Endothelial cell of umbilical vein (primary cell): ENCODE measurements at regions of chr5 and their contacts with region 1.

Region 1: GRCh38 chr5:163347671-163348070 is 89.7 kb upstream of the CCNG1 start:
- DNase-seq: peak; percentile 57
- H3K4me3 ChIP-seq: no peak overlapping the region
- H3K27ac ChIP-seq: no peak overlapping the region
- H3K4me1 ChIP-seq: no peaks in the 10 kb centered on the region
- H3K27me3 ChIP-seq: no peaks in the 10 kb centered on the region
- CTCF ChIP-seq: peak; percentile 60 to 66
- POLR2A ChIP-seq: no peak

Region 2: DNA sequence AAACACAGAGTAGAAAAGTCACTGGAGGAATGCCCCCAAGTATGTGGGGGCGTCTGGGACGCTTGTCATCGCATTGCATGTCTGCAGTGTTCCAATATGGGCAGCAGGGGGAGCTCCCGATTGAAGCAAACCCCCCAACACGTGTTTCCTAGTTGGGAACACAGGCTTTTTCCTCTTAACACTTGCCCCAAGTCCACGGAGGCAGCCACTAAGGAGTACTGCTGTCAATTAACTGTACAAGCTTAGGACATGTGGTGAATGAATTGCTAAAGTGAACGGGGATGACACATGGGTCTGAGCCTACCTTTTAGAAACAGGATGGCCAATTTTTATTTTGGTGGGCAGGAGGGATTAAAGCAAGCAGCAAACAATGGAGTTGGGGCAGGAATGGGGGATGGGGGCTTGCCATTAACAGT is 1803.3 kb before region 1 on chr5:
- CTCF ChIA-PET with region 1: interaction called, 17 read pairs
- POLR2A ChIA-PET with region 1: no interaction called
- dilution Hi-C with region 1: no loop called
- intact Hi-C with region 1: no loop called
- DNase-seq: peak; percentile 12
- H3K4me3 ChIP-seq: no peak overlapping the region
- H3K27ac ChIP-seq: no peak overlapping the region
- H3K4me1 ChIP-seq: no peaks in the 10 kb centered on the region
- H3K27me3 ChIP-seq: peaks cover 9 to 28% of the 10 kb centered on the region in 2 experiments
- CTCF ChIP-seq: peak; percentile 66 to 72
- POLR2A ChIP-seq: no peak

Region 3: DNA sequence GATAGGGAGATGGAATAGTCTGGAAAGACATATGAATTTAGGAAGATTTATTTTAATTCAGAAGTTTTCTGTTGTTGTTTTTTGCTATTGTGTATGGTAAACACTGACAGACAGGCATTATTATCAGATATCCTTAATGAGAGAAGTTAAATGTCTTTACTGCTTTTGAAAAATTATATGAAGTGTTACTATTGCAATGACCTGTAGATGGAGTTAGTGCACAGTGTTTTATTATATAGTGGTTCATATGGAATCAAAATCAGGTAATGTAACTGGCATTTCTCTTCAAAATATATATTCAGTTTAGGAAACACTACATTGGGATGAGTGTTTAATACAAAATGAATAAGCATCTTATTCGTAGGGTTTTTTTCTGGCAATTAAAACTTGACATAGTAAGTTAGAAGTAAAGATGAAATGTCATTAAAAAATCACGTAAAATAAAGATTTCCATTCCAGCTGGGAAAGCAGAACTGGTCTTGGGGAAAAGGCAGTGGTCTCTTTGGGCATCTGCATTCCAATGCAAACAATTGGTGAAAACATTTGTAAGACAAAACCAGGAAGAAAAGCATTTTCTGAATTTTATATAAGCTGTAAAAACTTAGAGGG is 1495.9 kb before region 1 on chr5:
- CTCF ChIA-PET with region 1: no interaction called
- POLR2A ChIA-PET with region 1: no interaction called
- dilution Hi-C with region 1: no loop called
- intact Hi-C with region 1: loop called (anchors 2 kb)
- DNase-seq: no peak
- H3K4me3 ChIP-seq: no peak overlapping the region
- H3K27ac ChIP-seq: no peak overlapping the region
- H3K4me1 ChIP-seq: no peaks in the 10 kb centered on the region
- H3K27me3 ChIP-seq: no peaks in the 10 kb centered on the region
- CTCF ChIP-seq: no peak
- POLR2A ChIP-seq: no peak

Region 4: DNA sequence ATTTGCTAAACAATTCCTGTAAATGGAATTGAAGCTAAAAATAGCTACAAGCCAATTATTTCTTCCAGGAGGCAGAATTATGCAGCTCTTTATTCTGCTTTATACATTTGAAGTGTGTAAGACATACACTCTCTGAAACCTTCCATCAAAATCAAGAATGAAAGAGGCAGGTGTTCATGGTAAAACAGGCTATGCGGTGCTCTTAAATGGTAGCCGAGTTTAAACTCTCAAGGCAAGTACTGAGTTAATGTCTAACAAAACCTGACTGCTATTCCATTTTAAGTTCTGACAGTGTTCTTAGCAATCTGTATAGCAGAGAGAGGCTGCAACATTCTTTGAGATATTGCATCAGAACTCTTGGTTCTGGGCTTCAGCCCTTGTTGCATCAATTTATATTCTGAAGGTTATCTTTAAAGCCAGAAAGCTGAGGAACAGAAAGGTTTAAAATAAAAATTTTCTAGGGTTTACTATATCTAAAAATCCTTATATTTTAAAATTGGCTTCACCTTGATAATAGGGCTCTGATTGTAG is 158.6 kb before region 1 on chr5:
- CTCF ChIA-PET with region 1: no interaction called
- POLR2A ChIA-PET with region 1: no interaction called
- dilution Hi-C with region 1: no loop called
- intact Hi-C with region 1: no loop called
- DNase-seq: no peak
- H3K4me3 ChIP-seq: no peak overlapping the region
- H3K27ac ChIP-seq: no peak overlapping the region
- H3K4me1 ChIP-seq: no peaks in the 10 kb centered on the region
- H3K27me3 ChIP-seq: no peaks in the 10 kb centered on the region
- CTCF ChIP-seq: no peak
- POLR2A ChIP-seq: no peak